Pancreas (tissue), 10 donors: ENCODE measurements at regions of chr17 and their contacts with region 1.

Region 1: DNA sequence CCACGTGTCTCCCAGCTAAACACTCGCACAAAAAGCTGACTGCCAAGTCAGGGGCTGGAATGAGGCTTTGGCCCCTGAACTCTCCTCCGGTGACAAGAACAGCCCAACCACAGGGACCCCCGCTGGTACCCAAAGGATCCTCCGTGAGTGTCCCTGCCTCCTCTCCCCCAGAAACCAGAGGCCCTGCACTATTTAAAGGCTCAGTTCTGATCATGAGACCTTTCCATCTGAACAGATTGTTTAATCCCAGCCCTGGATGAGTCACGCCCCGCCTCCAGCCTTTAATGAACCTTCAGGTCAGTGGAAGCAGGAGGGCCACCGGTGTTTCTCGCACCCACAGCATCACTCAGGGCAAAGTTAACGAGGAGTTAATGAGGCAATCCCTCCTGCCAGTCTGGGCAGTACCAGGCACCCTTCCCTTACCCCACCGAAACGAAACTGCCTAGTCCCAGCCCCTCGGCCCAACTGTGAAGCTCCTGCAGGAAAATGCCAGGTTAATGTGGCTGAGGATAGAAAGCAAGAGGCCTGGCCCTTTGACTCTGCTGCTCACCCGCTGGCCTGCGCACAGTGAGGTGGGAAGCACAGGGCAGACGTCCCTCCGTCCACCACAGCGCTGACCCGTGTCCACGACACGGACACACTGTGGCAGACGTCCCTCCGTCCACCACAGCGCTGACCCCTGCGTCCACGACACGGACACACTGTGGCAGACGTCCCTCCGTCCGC is 32.4 kb downstream of the TIMM22 start:
- DNase-seq: peak in 1 of 6 donors; percentile 39
- ATAC-seq: peak in 3 of 4 donors; percentile 32 to 56 (median 40)
- H3K4me3 ChIP-seq: no peak overlapping the region
- H3K27ac ChIP-seq: no peak overlapping the region
- H3K4me1 ChIP-seq: no peaks in the 10 kb centered on the region
- H3K27me3 ChIP-seq: no peaks in the 10 kb centered on the region
- CTCF ChIP-seq: no peak

Region 2: GRCh38 chr17:915538-916201 is 113.7 kb before region 1 on chr17:
- intact Hi-C with region 1: no loop called
- DNase-seq: no peak
- ATAC-seq: peak in 3 of 4 donors; percentile 24 to 39 (median 32)
- H3K4me3 ChIP-seq: no peak overlapping the region
- H3K27ac ChIP-seq: no peak overlapping the region
- H3K4me1 ChIP-seq: peaks cover 0 to 5% (median 0%) of the 10 kb centered on the region in 3 donors
- H3K27me3 ChIP-seq: no peaks in the 10 kb centered on the region
- CTCF ChIP-seq: no peak

Region 3: DNA sequence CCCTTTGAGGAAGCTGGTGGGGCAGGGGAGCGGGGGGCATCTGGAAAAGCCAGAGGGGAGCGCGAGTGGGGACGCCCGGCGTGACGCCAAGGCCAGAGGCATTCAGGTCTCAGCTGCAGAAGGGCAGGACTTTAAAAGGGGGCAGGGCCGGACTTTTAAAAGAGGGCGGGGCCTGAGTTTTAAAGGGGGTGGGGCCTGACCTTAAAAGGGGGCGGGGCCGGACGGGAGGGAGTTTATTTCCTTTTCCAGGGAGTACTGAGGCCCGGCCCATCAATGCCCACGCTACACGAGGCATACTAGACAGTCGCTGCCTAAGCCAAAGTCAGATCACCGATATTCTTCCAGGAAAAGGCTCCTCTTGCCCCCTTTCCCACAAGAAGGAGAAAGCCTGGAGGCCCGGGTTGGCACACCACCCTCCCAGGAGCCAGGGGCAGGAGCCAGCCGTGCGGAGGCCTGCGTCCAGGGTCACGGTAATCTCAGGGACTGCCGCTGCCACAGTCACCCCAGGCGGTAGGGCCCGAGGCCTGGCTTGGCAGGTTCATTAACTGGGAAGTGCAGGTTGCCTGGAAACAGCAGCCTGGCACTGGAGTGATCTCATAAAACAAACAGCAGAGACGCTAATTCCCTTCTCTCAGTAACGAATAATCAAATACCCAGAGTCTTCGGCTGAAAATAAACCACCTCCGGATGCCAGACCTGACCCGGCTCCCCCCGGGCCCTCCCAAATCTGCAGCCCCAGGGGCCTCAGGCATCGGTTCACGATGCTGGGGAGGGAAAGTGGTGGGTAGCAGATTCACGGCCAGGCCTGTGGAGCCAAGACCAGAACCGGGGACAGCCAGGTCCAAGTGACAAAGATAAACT is 58.3 kb after region 1 on chr17:
- intact Hi-C with region 1: loop called in 1 of 3 experiments (anchors 10 kb)
- DNase-seq: peak; percentile 87 to 97 (median 93)
- ATAC-seq: peak; percentile 92 to 95 (median 94)
- H3K4me3 ChIP-seq: peak overlapping the region in 2 of 4 donors; percentile 10 to 11
- H3K27ac ChIP-seq: peak overlapping the region; percentile 92 to 98 (median 94)
- H3K4me1 ChIP-seq: peaks cover 0 to 11% (median 10%) of the 10 kb centered on the region in 3 donors
- H3K27me3 ChIP-seq: no peaks in the 10 kb centered on the region
- CTCF ChIP-seq: no peak

Region 4: GRCh38 chr17:1203111-1203966 is 174.0 kb after region 1 on chr17:
- intact Hi-C with region 1: no loop called
- DNase-seq: peak; percentile 30 to 84 (median 67)
- ATAC-seq: peak; percentile 68 to 87 (median 75)
- H3K4me3 ChIP-seq: peak overlapping the region; percentile 11 to 48 (median 34)
- H3K27ac ChIP-seq: no peak overlapping the region
- H3K4me1 ChIP-seq: no peaks in the 10 kb centered on the region
- H3K27me3 ChIP-seq: no peaks in the 10 kb centered on the region
- CTCF ChIP-seq: no peak